Activated CD4-positive, alpha-beta T cell treated with anti-CD3 and anti-CD28 coated beads for 36 hours (primary cell): ENCODE measurements at regions of chr17 and their contacts with region 1.

Region 1: DNA sequence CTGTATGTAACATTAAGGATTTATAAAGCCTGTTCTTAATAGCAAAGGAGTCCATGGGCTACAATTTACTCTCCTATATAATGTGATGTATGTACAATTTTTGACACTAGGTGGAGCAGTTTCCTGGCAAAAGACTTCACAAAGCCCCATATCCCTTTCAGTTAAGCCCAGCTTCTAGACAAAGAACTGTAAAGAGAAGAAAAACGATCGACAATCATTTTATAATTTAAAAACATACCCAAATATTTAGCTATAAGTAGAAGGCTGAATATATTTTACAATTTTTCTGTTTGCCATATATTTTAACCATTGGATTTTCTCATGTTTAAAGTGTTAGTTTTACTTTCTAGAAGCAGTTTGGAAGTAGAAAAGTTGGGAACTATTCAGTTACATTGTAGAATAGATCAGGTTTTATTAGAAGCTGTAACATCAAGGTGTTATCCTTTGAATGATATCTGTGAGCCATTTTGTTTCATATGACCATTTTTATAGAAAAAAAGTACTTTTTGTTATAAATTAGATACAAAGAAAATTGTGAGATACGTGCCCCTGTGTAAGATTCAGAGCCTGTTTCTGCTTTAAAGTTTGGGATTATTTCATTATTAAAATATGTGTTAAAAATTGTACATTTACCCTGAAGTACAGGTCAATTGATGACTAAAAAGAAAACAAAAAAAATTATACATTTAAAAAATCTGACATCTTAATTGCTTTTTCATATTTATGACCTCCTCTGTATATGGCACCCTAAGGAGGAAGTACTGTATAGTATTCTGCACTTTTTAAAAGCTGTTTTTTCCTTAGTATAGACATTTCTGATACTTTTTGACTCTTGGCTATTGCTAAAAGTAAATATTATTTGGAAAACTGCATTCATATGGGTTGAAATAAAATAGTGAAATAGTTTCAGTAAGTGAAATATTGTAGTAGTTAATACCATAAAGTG is 46.3 kb downstream of the VMP1 start:
- DNase-seq: no peak
- ATAC-seq: peak; percentile 47
- H3K4me3 Mint-ChIP-seq: peak overlapping the region; percentile 66
- H3K27ac Mint-ChIP-seq: peak overlapping the region; percentile 92
- H3K4me1 Mint-ChIP-seq: peaks cover 71% of the 10 kb centered on the region
- H3K27me3 Mint-ChIP-seq: no peaks in the 10 kb centered on the region

Region 2: DNA sequence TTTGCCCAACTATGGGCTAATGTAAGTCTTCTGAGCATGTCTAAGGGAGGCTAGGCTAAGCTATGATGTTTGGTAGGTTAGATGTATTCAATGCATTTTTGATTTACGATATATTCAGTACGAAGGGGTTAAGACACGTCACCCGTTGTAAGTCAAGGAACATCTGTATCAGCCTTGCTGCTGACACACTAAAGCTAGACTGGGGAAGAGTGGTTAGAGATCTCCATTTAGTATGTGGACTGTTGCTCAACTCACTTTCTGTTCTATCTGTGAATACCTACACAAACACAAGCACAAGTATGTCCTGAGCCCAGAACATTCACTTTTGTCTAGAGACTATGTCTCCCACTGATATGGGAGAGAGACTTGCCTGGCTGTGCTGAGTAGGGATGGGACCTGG is 25.2 kb after region 1 on chr17:
- CTCF ChIA-PET with region 1: interaction called, 110 read pairs
- POLR2A ChIA-PET with region 1: interaction called, 18 read pairs
- intact Hi-C with region 1: no loop called
- DNase-seq: no peak
- ATAC-seq: peak; percentile 13
- H3K4me3 Mint-ChIP-seq: no peak overlapping the region
- H3K27ac Mint-ChIP-seq: peak overlapping the region; percentile 79
- H3K4me1 Mint-ChIP-seq: peaks cover 54% of the 10 kb centered on the region
- H3K27me3 Mint-ChIP-seq: no peaks in the 10 kb centered on the region

Region 3: GRCh38 chr17:59837308-59838051 is 83.7 kb after region 1 on chr17:
- CTCF ChIA-PET with region 1: interaction called, 113 read pairs
- POLR2A ChIA-PET with region 1: interaction called, 252 read pairs
- intact Hi-C with region 1: loop called (anchors 1 to 2 kb)
- DNase-seq: peak; percentile 77
- ATAC-seq: peak; percentile 77
- H3K4me3 Mint-ChIP-seq: peak overlapping the region; percentile 100
- H3K27ac Mint-ChIP-seq: peak overlapping the region; percentile 100
- H3K4me1 Mint-ChIP-seq: peaks cover 41% of the 10 kb centered on the region
- H3K27me3 Mint-ChIP-seq: peaks cover 3% of the 10 kb centered on the region

Region 4: GRCh38 chr17:59859444-59860025 is 105.7 kb after region 1 on chr17:
- CTCF ChIA-PET with region 1: interaction called, 4 read pairs
- POLR2A ChIA-PET with region 1: interaction called, 7 read pairs
- intact Hi-C with region 1: loop called (anchors 1 kb)
- DNase-seq: no peak
- ATAC-seq: peak; percentile 60
- H3K4me3 Mint-ChIP-seq: no peak overlapping the region
- H3K27ac Mint-ChIP-seq: peak overlapping the region; percentile 37
- H3K4me1 Mint-ChIP-seq: peaks cover 20% of the 10 kb centered on the region
- H3K27me3 Mint-ChIP-seq: no peaks in the 10 kb centered on the region

Region 5: DNA sequence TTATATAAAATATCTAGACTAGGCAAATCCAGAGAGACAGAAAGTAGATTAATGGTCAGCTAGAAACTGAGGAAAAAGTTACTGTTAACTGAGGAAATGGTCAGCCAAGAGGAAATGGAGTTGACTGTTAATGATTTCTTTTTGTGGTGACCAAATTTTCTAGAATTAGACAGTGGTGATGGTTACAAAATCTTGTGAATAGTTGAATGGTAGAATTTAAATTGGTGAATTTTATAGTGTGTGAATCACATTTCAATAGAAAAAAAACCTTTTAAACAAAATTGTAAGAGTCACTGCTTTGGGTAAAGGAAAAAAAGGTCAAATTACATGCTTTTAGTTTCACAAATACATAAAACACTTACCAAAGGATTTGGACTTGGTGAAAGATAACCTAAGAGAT is 742.3 kb after region 1 on chr17:
- CTCF ChIA-PET with region 1: no interaction called
- POLR2A ChIA-PET with region 1: no interaction called
- intact Hi-C with region 1: no loop called
- DNase-seq: no peak
- ATAC-seq: no peak
- H3K4me3 Mint-ChIP-seq: no peak overlapping the region
- H3K27ac Mint-ChIP-seq: no peak overlapping the region
- H3K4me1 Mint-ChIP-seq: no peaks in the 10 kb centered on the region
- H3K27me3 Mint-ChIP-seq: no peaks in the 10 kb centered on the region